ENCODE measurements at regions of chr7 and their contacts with region 1.

Region 1: DNA sequence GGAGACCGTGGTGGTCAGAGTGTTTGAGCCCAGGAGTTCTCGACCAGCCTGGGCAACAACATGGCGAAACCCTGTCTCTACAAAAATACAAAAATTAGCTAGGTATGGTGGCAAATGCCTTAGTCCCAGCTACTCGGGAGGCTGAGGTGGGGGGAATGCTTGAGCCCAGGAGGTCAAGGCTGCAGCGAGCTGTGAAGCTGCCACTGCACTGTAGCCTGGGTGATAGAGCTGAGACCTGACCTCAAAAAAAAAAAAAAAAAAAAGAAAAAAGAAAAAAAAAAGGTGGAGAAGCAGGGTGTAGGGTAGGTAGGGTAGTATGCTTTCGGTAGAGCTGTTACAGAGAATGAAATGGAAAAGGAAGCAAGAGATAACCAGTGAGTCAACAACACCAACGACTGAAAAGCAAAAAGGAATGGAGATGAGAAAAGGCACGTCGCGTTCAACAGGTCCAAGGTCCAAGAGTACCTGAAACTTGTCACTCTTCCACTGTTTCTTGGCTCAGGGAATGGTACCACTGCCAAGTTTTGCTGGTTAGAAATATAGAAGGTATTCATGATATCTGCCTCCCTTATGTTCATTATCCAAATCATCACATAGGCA is 4.3 kb upstream of the RSBN1L start:
- DNase-seq: no peak

Region 2: DNA sequence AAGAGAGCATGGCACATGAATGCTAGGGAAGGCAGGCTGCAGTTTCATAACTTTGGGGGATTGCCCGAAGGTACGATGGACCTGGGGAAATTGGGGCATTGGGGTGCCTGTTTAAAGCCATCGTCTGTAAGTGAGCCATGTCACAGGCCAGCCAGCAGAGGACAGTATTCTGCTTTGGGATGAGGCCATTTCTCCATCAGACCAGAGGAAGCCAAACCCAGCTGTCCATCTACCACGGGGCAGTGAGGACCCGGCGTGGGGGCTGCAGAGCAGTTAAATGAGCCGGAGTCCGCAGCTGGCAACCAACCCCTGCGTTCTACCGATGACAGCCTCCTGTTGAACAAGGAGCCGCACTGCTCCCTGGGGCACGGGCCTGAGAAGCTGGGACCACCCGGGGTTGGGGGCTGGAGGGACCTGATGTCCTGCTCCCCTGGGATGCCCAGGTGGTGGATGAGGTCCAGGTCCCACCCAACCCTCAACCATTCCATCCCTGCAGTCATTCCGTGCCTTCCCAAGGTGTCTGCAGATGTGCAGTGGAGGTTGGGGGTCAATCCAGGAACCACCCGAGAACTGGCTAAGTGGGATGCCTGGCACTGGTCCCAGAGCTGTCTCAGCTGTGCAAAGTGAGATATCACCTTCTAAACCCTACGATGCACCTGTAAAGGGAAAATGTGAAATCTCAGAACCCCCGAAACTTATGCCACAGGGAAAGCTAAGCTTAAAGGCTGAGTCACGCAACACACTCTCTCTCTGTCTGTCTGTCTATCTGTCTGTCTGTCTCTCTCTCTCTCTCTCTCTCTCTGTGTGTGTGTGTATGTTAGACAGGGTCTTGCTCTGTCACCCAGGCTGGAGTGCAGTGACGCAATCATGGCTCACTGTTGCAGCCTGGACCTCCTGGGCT is 1825.3 kb before region 1 on chr7:
- intact Hi-C with region 1: no loop called
- DNase-seq: peak; percentile 86

Region 3: GRCh38 chr7:77752021-77752420 is 60.0 kb after region 1 on chr7:
- intact Hi-C with region 1: loop called in 1 of 2 experiments (anchors 2 kb)
- DNase-seq: no peak